PC-3 (cell line): ENCODE measurements at regions of chr3 and their contacts with region 1.

Region 1: GRCh38 chr3:42749753-42750231 is 23.3 kb downstream of the CCDC13 start:
- DNase-seq: peak; percentile 23
- ATAC-seq: peak; percentile 34
- H3K4me3 ChIP-seq: no peak overlapping the region
- H3K27ac ChIP-seq: no peak overlapping the region
- H3K4me1 ChIP-seq: peaks cover 27% of the 10 kb centered on the region
- H3K27me3 ChIP-seq: no peaks in the 10 kb centered on the region
- CTCF ChIP-seq: peak; percentile 61

Region 2: DNA sequence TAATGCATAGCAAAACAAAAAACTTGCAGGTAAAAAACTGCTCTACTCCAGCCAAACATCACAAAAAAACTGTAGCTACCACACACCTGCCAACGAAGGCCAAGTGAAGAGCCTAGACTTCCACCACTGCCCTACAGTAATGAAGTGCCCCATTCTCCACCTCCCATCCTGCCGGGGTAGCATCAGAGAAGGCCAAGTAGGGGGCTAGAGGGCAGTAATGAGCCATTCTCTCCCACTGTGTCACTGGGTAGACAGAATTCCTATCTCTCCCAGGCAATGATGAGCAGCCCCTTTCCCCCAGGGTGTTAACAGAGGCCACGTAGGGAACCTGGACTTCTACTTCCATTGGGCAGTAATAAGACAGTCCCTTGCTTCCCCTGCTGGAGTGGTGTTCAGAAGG is 177.5 kb before region 1 on chr3:
- CTCF ChIA-PET with region 1: no interaction called
- POLR2A ChIA-PET with region 1: no interaction called
- intact Hi-C with region 1: loop called (anchors 2 kb)
- DNase-seq: peak; percentile 72
- ATAC-seq: peak; percentile 100
- H3K4me3 ChIP-seq: no peak overlapping the region
- H3K27ac ChIP-seq: no peak overlapping the region
- H3K4me1 ChIP-seq: no peaks in the 10 kb centered on the region
- H3K27me3 ChIP-seq: no peaks in the 10 kb centered on the region
- CTCF ChIP-seq: peak; percentile 82

Region 3: DNA sequence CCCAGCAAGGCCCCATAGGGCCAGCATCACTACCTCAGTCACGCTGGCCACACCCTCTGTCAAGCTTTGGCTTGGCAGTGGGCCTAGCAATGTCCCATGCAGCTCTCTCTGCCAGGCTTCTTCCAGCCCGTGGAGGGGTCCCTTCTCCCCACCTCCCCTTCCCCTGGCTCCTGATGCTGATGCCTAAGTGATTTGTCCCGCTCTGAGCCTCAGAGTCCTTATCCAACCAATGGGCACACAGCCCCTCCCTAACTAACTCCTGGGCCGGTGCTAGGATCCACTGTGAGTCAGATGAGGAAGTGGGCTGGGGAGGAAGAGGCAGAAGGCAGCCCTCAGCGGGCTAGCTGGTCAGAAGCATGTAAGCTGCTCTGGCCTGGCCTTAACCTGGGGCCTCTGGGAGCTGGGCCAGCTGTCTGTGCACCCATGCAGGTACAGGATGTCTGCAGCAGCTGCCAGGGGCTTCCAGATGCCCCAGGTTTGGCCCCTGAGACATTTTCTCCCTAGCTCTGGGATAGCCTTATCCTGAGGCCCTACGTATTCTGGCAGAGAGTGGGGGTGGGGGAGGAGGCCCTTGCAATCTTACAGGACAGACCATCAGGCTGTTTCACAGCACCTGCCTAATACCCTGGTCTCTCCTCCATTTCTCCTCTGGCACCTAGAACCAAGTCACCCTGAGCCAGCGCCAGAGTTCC is 97.0 kb before region 1 on chr3:
- CTCF ChIA-PET with region 1: interaction called, 3 read pairs
- POLR2A ChIA-PET with region 1: no interaction called
- intact Hi-C with region 1: loop called (anchors 1 kb)
- DNase-seq: peak; percentile 90
- ATAC-seq: peak; percentile 75
- H3K4me3 ChIP-seq: peak overlapping the region; percentile 85
- H3K27ac ChIP-seq: peak overlapping the region; percentile 53
- H3K4me1 ChIP-seq: peaks cover 28% of the 10 kb centered on the region
- H3K27me3 ChIP-seq: no peaks in the 10 kb centered on the region
- CTCF ChIP-seq: no peak

Region 4: GRCh38 chr3:42683875-42684598 is 65.8 kb before region 1 on chr3:
- CTCF ChIA-PET with region 1: no interaction called
- POLR2A ChIA-PET with region 1: no interaction called
- intact Hi-C with region 1: loop called (anchors 1 kb)
- DNase-seq: peak; percentile 96
- ATAC-seq: peak; percentile 95
- H3K4me3 ChIP-seq: peak overlapping the region; percentile 45; the same call in 1 of the 2 replicates
- H3K27ac ChIP-seq: peak overlapping the region; percentile 29
- H3K4me1 ChIP-seq: peaks cover 15% of the 10 kb centered on the region
- H3K27me3 ChIP-seq: no peaks in the 10 kb centered on the region
- CTCF ChIP-seq: no peak

Region 5: GRCh38 chr3:42823351-42823750 is 73.6 kb after region 1 on chr3:
- CTCF ChIA-PET with region 1: no interaction called
- POLR2A ChIA-PET with region 1: no interaction called
- intact Hi-C with region 1: no loop called
- DNase-seq: no peak
- ATAC-seq: no peak
- H3K4me3 ChIP-seq: no peak overlapping the region
- H3K27ac ChIP-seq: peak overlapping the region; percentile 91
- H3K4me1 ChIP-seq: peaks cover 65% of the 10 kb centered on the region
- H3K27me3 ChIP-seq: no peaks in the 10 kb centered on the region
- CTCF ChIP-seq: no peak